Thyroid gland (tissue), 4 donors: ENCODE measurements at regions of chr3 and their contacts with region 1.

Region 1: GRCh38 chr3:179558742-179559364 is 3.9 kb upstream of the ACTL6A start:
- DNase-seq: peak; percentile 49 to 58
- H3K4me3 ChIP-seq: no peak overlapping the region
- H3K27ac ChIP-seq: no peak overlapping the region
- H3K4me1 ChIP-seq: peaks cover 2 to 3% of the 10 kb centered on the region in 2 donors
- H3K27me3 ChIP-seq: no peaks in the 10 kb centered on the region
- CTCF ChIP-seq: peak; percentile 14 to 80 (median 62)
- POLR2A ChIP-seq: no peak

Region 2: DNA sequence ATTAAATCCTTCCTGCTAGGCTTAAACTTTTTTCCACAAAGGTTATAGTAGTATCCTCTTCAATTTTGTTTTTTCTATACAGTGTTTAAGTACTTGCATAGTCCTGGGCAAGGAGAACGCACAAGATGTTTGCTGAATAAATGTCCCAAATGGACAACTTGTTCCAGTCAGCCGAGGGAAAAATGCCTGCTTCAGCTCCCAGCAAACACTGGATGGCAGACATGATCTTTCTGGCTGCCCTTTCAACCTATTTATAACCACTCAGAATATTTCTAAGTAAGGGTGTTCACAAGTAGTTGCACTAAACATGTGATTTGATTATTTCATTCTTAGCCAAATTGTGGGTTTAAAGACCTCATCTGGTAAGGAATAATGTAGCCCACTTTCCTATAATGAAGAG is 137.4 kb before region 1 on chr3:
- intact Hi-C with region 1: loop called (anchors 10 kb)
- DNase-seq: peak; percentile 26 to 29
- H3K4me3 ChIP-seq: no peak overlapping the region
- H3K27ac ChIP-seq: no peak overlapping the region
- H3K4me1 ChIP-seq: no peaks in the 10 kb centered on the region
- H3K27me3 ChIP-seq: no peaks in the 10 kb centered on the region
- CTCF ChIP-seq: peak in 5 of 6 experiments; percentile 30 to 59 (median 51)
- POLR2A ChIP-seq: no peak

Region 3: DNA sequence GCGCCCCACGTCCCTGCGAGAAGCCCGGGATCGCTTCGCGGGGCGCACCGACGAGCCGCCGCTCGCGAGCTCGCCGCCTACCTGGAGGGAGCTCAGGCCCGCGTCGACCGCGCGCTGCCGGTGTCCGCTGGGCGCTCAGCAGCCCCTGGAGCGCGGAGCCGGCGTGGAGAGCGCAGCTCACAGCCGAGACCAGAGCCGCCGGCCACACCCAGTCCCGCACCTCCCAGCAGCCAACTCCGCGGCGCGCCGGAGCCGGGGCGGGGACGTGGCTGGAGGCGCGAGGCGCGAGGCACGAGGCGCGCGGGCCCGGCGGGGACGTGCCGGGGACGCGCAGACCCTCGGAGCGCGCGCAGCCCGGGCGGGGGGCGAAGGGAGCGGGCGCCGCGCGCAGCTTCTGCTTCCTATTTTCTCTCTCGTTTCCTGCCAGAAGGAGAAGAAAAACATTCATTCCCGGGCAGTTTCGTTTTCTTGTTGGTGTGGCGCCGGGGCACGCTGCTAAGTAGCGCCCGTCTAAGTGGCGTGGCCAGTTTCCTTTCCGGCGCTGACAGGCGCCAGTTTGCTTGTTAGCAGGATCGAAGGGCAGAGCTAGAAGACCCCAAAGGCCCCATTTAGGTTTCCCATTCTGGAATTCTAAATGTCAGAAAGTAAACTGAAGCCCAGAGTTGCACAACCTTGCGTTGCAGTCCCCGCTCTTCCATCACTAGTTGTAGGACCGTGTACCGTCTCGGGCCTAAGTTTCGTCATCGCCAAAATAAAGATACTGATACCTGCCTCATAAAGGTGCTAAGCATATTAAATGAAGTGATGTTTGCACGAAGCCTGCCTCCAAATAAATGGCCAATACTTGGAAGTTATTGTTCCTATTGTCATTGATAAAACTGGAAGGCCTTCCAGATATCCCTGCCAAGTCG is 107.3 kb before region 1 on chr3 and contains the start of gene GNB4:
- intact Hi-C with region 1: no loop called
- DNase-seq: peak; percentile 72 to 77
- H3K4me3 ChIP-seq: peak within 1 kb of the TSS; percentile 49 to 61 (median 57)
- H3K27ac ChIP-seq: peak within 1 kb of the TSS; percentile 66 to 92 (median 85)
- H3K4me1 ChIP-seq: peaks cover 9% of the 10 kb centered on the region in 2 donors
- H3K27me3 ChIP-seq: no peaks in the 10 kb centered on the region
- CTCF ChIP-seq: no peak
- POLR2A ChIP-seq: peak in 1 of 2 donors; percentile 66
- total RNA-seq, gene GNB4: 14.5 to 43.7 (median 28.8) TPM

Region 4: GRCh38 chr3:179852142-179852905 is 293.5 kb after region 1 on chr3:
- intact Hi-C with region 1: no loop called
- DNase-seq: no peak
- H3K4me3 ChIP-seq: no peak overlapping the region
- H3K27ac ChIP-seq: no peak overlapping the region
- H3K4me1 ChIP-seq: no peaks in the 10 kb centered on the region
- H3K27me3 ChIP-seq: no peaks in the 10 kb centered on the region
- CTCF ChIP-seq: no peak
- POLR2A ChIP-seq: no peak